Common myeloid progenitor, CD34-positive (primary cell): ENCODE measurements at regions of chr16 and their contacts with region 1.

Region 1: DNA sequence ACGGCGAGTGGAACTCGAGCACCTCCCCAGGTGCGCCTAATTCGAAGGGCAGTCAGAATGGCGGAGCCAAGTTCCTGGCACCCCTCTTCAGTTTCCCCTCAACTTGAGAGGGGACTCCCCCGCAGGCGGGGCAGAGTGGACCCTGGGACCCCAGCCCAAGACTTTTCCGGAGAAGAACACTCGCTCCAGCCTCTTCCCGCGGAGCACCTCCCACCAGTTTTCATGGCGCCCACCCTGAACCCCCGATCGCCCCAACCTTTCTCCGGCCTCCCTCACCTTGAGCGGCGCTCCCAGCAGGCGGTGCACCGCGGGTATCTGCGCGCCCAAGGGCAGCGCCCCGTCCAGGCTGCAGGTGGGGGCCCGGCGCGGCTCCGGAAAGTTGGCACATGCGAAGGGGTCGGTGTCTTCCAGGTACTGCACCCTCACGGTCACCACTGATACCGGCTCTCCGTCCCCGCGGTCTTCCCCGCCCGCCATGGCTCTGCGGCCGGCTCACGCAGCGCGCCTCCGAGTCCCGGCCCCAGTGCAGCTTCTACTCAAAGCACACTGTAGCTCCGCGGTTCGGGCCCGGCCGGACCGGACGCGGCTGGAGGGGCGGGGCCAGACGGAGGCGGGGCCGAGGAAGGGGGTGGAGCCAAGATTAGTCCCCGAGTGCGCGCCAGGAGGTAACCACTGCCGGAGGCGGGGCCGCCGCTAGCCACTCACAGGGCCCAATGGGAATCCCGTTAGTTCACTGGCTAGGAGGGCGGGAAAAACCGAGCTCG is at the start of gene FHOD1:
- DNase-seq: peak; percentile 87 to 95 (median 95)
- H3K4me3 ChIP-seq: peak within 1 kb of the TSS; percentile 72 to 94 (median 87)
- H3K27ac ChIP-seq: peak within 1 kb of the TSS in 1 of 2 experiments; percentile 93
- H3K4me1 ChIP-seq: peaks cover 18 to 64% (median 63%) of the 10 kb centered on the region in 4 experiments
- H3K27me3 ChIP-seq: peaks cover 0 to 23% (median 13%) of the 10 kb centered on the region in 5 experiments

Region 2: DNA sequence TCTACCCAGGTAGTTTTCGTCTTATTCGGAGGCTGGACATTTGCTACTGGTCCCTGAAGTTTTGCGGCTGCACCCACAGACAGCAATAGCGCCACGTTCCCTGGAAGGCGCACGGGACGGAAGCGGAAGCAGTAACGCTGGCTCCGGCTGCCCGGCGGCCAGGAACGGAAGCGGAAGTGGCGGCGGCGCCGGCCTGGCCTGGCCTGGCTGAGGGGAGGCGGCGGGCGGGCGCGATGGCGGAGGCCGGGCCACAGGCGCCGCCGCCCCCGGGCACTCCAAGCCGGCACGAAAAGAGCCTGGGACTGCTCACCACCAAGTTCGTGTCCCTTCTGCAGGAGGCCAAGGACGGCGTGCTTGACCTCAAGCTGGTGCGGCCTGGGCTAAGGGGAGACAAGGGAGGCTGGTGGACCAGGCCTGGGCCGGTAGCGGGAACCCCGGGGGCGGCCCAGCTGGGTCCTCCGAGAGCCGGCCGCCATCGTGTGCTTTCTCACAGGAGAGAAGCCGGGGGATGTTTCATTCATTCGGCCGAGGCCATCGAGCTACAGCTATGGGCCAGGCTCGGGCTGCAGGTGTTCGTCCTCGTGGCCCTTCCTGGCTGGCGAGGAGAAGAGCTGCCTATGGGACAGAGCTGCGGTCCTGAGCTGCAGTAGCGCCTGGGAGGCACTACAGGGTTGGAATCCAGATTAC is 55.0 kb before region 1 on chr16 and contains the start of gene E2F4:
- CTCF ChIA-PET with region 1: interaction called, 17 read pairs
- POLR2A ChIA-PET with region 1: no interaction called
- DNase-seq: peak; percentile 91 to 96 (median 96)
- H3K4me3 ChIP-seq: peak within 1 kb of the TSS; percentile 72 to 98 (median 91)
- H3K27ac ChIP-seq: peak within 1 kb of the TSS; percentile 66 to 90
- H3K4me1 ChIP-seq: peaks cover 0 to 22% (median 19%) of the 10 kb centered on the region in 4 experiments
- H3K27me3 ChIP-seq: peaks cover 0 to 1% (median 0%) of the 10 kb centered on the region in 5 experiments

Region 3: DNA sequence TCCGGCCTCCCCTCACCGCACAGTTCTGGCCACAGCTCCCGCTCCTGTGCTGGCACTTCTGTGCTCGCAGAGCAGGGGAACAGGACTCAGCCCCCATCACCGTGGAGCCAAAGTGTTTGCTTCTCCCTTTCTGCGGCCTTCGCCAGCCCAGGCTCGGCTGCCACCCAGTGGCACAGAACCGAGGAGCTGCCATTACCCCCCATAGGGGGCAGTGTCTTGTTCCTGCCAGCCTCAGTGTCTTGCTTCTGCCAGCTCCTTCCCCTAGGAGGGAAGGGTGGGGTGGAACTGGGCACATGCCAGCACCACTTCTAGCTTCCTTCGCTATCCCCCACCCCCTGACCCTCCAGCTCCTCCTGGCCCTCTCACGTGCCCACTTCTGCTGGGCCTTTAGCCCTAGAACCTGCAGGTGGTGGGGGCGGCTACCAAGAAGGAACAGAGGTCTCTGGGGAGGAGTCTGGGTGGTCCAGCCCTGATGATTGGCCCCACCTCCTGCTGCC is 48.8 kb before region 1 on chr16:
- CTCF ChIA-PET with region 1: interaction called, 17 read pairs
- POLR2A ChIA-PET with region 1: interaction called, 6 read pairs
- DNase-seq: peak; percentile 60 to 77 (median 77)
- H3K4me3 ChIP-seq: no peak overlapping the region
- H3K27ac ChIP-seq: no peak overlapping the region
- H3K4me1 ChIP-seq: peaks cover 0 to 8% (median 4%) of the 10 kb centered on the region in 4 experiments
- H3K27me3 ChIP-seq: no peaks in the 10 kb centered on the region

Region 4: GRCh38 chr16:67226804-67227557 is 20.1 kb before region 1 on chr16 and contains the start of gene TMEM208:
- CTCF ChIA-PET with region 1: interaction called, 108 read pairs
- POLR2A ChIA-PET with region 1: interaction called, 42 read pairs
- DNase-seq: peak; percentile 99
- H3K4me3 ChIP-seq: peak within 1 kb of the TSS; percentile 80 to 97 (median 90)
- H3K27ac ChIP-seq: peak within 1 kb of the TSS; percentile 74 to 88
- H3K4me1 ChIP-seq: peaks cover 11 to 42% (median 32%) of the 10 kb centered on the region in 4 experiments
- H3K27me3 ChIP-seq: no peaks in the 10 kb centered on the region

Region 5: DNA sequence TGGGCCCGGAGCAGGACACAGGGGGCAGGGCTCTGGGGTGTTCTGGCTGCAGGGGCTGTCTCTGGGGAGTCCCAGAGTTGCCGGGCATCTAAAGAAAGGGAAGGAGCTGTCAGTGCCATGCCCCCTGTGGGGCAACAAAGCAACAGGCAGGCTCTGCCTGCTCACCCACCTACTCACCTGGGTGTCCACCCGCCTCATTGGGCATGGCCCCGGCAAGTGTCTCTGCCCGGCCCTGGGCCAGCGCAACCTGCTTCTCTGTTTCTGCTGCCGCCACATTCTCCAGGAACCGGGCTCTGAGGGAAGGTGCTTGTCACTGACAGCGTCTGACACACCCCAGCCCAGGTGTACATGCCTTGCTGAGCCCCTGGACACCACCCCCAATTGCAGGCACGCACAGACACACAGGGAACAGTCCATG is 12.9 kb before region 1 on chr16:
- CTCF ChIA-PET with region 1: interaction called, 108 read pairs
- POLR2A ChIA-PET with region 1: interaction called, 12 read pairs
- DNase-seq: no peak
- H3K4me3 ChIP-seq: no peak overlapping the region
- H3K27ac ChIP-seq: no peak overlapping the region
- H3K4me1 ChIP-seq: no peaks in the 10 kb centered on the region
- H3K27me3 ChIP-seq: no peaks in the 10 kb centered on the region

Region 6: GRCh38 chr16:67260426-67261075 is 13.4 kb after region 1 on chr16:
- CTCF ChIA-PET with region 1: interaction called, 15 read pairs
- POLR2A ChIA-PET with region 1: interaction called, 3 read pairs
- DNase-seq: peak; percentile 63 to 83 (median 80)
- H3K4me3 ChIP-seq: no peak overlapping the region
- H3K27ac ChIP-seq: no peak overlapping the region
- H3K4me1 ChIP-seq: peaks cover 0 to 3% (median 0%) of the 10 kb centered on the region in 4 experiments
- H3K27me3 ChIP-seq: peaks cover 0 to 3% (median 0%) of the 10 kb centered on the region in 5 experiments